ENCODE measurements at regions of chr6 and their contacts with region 1.

Region 1: GRCh38 chr6:36131511-36132245 is 1.4 kb downstream of the MAPK13 start:
- DNase-seq: peak; percentile 80
- ATAC-seq: peak; percentile 84
- H3K4me3 Mint-ChIP-seq: peak overlapping the region; percentile 84
- H3K27ac Mint-ChIP-seq: peak overlapping the region; percentile 96
- H3K4me1 Mint-ChIP-seq: peaks cover 55% of the 10 kb centered on the region
- H3K27me3 Mint-ChIP-seq: no peaks in the 10 kb centered on the region

Region 2: DNA sequence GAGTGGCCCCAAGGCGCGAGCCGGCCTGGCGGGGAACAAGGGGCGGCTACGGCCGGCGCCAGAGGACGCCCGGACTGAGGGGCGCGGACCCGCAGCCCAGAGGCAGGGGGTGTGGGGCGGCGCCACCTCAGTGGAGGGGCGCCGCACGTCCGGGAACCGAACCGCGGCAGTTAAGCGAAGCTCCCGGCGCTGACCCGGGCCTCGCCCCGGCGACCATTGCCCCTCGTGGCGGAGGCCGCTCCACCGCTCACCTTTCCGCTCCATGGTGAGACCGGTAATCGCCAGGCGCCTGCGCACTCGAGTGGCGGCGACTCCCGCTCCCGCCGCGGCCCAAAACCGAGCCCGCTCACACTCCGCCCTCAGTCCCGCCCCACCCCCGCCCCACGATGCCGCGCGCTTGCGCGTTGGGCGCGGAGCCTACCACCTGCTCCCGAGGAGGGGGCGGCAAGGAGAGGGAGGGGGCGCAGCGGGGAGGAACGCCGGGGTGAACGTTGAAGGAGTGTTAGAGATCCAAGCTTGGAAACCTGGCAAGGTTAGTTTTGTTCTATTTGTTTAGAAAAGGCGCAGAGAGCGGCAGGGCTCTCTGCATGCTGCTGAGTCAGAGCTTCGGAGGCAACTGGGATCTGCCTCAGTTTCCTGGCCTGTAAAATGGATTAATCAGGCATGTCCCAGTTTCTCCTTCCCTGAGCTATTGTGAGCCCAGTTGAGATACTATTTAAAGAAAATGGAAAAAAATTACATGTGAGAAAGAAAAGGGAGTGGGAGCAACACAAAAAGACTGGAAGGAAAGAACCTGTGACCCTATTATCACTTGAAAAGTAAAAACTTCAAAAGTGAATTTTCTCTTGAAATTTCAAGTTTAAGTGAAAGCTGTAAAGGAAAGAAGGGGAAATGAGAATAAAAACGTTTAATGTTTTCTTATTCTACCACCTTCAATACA is 210.6 kb before region 1 on chr6 and contains the start of gene SRPK1:
- CTCF ChIA-PET with region 1: no interaction called
- POLR2A ChIA-PET with region 1: no interaction called
- intact Hi-C with region 1: loop called in 1 of 2 experiments (anchors 2 kb)
- DNase-seq: peak; percentile 94
- ATAC-seq: peak; percentile 80
- H3K4me3 Mint-ChIP-seq: peak within 1 kb of the TSS; percentile 95
- H3K27ac Mint-ChIP-seq: peak within 1 kb of the TSS; percentile 97
- H3K4me1 Mint-ChIP-seq: peaks cover 45% of the 10 kb centered on the region
- H3K27me3 Mint-ChIP-seq: no peaks in the 10 kb centered on the region
- total RNA-seq, gene SRPK1: 100 to 118 TPM